ENCODE measurements at regions of chr9 and their contacts with region 1.

Region 1: DNA sequence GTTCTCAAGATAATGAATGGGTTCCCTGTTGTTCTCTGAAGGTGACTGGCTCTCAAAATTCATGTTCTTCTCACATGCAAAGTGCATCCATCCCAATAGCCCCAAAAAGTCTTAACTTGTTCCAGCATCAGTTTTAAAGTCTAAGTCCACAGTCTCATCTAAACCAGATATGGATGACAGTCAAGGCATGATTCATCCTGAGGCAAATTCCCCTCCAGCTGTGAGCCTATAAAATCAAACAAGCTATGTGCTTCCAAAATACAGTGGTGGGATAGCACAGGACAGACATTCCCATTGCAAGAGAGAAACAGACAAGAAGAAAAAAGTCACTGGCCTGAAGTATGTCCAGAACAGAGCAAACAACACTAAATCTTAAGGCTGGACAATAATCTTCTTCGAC is 25.4 kb downstream of the FBXO10 start:
- DNase-seq: no peak
- ATAC-seq: peak; percentile 5 to 38 (median 18)
- H3K4me3 ChIP-seq: no peak overlapping the region
- H3K27ac ChIP-seq: peak overlapping the region; percentile 58
- H3K4me1 ChIP-seq: peaks cover 20% of the 10 kb centered on the region
- H3K27me3 ChIP-seq: no peaks in the 10 kb centered on the region
- CTCF ChIP-seq: no peak

Region 2: DNA sequence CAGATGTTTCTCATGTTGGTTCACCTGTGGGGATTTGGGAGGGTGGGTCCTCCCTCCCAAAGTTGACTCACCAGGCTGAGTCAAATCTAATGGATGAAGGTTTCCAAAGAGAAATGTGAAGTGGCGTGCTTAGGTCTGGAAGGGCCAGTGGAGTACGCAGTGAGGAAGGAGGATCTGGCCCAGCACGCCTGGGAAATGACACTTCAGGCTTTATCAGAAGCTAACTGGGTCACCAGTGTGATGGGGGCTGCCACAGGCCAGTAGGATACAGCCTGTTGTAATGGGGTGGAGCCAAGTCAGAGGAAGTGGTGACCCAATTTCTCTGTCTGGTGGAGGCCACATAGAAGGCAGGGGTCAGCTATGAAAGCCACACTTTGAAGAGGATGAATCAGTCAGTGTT is 47.0 kb before region 1 on chr9:
- intact Hi-C with region 1: loop called in 1 of 2 experiments (anchors 10 kb)
- DNase-seq: no peak
- ATAC-seq: peak in 2 of 4 donors; percentile 12 to 21
- H3K4me3 ChIP-seq: no peak overlapping the region
- H3K27ac ChIP-seq: no peak overlapping the region
- H3K4me1 ChIP-seq: no peaks in the 10 kb centered on the region
- H3K27me3 ChIP-seq: no peaks in the 10 kb centered on the region
- CTCF ChIP-seq: no peak